ENCODE measurements at regions of chr9 and their contacts with region 1.

Region 1: DNA sequence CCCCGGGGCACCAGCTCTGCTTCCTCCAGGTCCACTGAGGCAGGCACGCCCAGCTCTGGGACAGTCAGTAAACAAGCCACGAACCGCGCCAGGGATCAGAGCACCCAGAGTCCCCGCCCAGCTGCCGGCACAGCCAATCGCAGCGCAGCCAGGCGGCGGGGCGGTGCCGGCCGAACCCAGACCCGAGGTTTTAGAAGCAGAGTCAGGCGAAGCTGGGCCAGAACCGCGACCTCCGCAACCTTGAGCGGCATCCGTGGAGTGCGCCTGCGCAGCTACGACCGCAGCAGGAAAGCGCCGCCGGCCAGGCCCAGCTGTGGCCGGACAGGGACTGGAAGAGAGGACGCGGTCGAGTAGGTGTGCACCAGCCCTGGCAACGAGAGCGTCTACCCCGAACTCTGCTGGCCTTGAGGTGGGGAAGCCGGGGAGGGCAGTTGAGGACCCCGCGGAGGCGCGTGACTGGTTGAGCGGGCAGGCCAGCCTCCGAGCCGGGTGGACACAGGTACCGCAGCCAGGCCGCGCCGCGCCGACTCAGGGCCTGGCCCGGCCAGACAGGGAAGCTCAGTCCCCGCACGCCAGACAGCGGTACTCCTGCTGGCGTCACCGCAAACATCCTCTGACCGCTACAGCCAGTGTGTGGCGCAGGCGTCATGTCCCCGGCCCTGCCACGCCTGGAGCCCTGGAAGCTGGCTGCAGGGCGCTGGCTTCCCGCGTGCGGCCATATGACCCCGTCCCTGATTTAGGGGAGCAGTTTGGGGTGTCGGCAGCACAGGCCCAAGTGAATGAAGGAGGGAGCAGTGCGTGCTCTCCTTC is at the start of gene CTSL:
- DNase-seq: peak; percentile 78
- H3K4me3 Mint-ChIP-seq: peak within 1 kb of the TSS; percentile 98
- H3K27ac Mint-ChIP-seq: peak within 1 kb of the TSS; percentile 99
- H3K4me1 Mint-ChIP-seq: peaks cover 6% of the 10 kb centered on the region
- H3K27me3 Mint-ChIP-seq: no peaks in the 10 kb centered on the region
- CTCF ChIP-seq: peak; percentile 26
- total RNA-seq, gene CTSL: 84.2 and 141 TPM in 2 replicates

Region 2: GRCh38 chr9:87684627-87685219 is 41.4 kb before region 1 on chr9:
- CTCF ChIA-PET with region 1: interaction called, 3 read pairs
- POLR2A ChIA-PET with region 1: interaction called, 3 read pairs
- intact Hi-C with region 1: loop called (anchors 2 kb)
- DNase-seq: peak; percentile 70
- H3K4me3 Mint-ChIP-seq: no peak overlapping the region
- H3K27ac Mint-ChIP-seq: no peak overlapping the region
- H3K4me1 Mint-ChIP-seq: peaks cover 6% of the 10 kb centered on the region
- H3K27me3 Mint-ChIP-seq: no peaks in the 10 kb centered on the region
- CTCF ChIP-seq: peak; percentile 67

Region 3: DNA sequence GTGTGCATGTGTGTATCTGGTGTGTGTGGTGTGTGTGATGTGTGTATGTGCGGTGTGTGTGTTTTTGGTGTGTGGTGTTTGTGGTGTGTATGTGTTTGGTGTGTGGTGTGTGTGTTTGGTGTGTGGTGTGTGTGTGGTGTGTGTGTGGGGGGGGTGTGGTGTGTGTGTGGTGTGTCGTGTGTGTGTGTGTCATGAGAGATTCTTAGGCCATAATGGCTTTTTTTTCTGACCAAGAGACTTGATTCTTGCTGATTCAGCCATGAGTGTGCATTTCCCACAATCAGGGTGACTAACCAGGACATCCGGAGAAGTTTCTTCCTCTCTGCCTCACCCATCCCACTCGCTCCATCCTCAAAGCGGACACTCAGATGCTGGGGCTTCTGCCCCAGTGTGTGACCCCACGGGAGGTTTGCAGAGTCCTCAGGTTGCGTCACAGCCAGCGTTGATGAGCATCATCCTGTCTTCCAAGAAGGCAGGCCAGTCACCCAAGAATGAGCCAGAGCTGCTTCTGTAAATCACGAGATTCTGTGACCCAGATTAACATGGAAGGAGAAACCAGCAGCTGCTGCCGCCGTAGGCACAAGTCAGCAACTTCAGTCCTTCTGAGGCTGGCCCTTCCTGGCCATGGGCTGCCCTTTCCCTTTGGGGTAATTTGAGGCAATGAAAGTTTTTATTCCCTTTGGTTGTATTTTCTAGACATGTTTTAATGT is 12.7 kb before region 1 on chr9:
- CTCF ChIA-PET with region 1: interaction called, 5 read pairs
- POLR2A ChIA-PET with region 1: interaction called, 36 read pairs
- intact Hi-C with region 1: no loop called
- DNase-seq: peak; percentile 94
- H3K4me3 Mint-ChIP-seq: peak overlapping the region; percentile 71
- H3K27ac Mint-ChIP-seq: peak overlapping the region; percentile 85
- H3K4me1 Mint-ChIP-seq: peaks cover 17% of the 10 kb centered on the region
- H3K27me3 Mint-ChIP-seq: no peaks in the 10 kb centered on the region
- CTCF ChIP-seq: no peak

Region 4: DNA sequence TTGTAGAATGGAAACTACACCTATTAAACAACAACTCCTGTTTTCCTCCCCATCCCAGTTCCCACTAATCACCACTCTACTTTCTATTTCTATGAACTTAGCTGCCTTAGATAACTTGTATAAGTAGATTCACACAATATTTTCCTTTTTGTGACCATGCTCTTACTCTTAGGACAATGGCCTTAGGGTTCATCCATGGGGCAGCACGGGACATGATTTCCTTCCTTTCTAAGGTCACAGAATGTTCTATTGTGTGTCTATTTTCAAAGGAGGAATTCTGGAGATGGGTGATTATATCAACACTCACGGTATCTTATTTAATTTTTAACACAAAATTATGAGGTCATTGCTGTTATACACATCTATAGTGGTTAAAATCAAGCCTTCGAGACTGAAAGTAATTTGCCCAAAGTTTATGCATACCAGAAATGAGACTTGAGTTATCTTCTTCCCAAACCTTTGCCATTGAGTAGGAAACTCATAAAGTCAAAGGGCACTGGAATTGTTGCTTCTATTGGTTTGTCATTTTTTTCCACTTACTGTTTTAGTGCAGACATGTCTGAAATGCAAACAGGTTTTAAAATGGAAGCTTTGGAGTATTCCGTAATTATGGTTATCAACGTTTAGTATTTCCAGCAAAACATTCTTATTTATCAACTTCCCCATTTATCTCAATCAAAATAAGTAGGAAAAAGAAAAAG is 23.4 kb after region 1 on chr9:
- CTCF ChIA-PET with region 1: no interaction called
- POLR2A ChIA-PET with region 1: no interaction called
- intact Hi-C with region 1: no loop called
- DNase-seq: no peak
- H3K4me3 Mint-ChIP-seq: no peak overlapping the region
- H3K27ac Mint-ChIP-seq: no peak overlapping the region
- H3K4me1 Mint-ChIP-seq: no peaks in the 10 kb centered on the region
- H3K27me3 Mint-ChIP-seq: no peaks in the 10 kb centered on the region
- CTCF ChIP-seq: no peak

Region 5: DNA sequence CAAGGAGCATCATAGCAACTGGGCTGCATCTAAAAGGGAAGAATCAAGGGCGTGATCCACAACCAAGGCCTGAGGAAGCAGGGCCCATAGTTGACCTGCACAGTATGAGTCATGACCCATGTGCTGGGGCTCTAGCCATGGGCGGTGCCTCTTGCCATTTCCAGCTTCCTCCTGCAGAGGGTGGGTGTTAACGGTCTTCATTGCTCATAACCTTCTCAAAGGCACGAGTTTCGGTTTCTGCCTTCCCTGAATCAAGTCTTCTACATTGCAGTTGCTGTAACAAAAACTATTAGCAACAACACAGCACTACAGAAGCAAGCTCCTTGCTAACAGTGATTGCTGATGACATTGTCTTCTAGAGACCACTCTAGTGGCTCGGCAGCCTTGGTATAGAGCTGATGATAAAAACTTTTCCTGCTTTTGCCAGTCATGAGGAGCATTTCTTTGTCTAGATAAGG is 66.8 kb after region 1 on chr9:
- CTCF ChIA-PET with region 1: interaction called, 3 read pairs
- POLR2A ChIA-PET with region 1: interaction called, 8 read pairs
- intact Hi-C with region 1: loop called (anchors 2 kb)
- DNase-seq: peak; percentile 96
- H3K4me3 Mint-ChIP-seq: peak overlapping the region; percentile 49
- H3K27ac Mint-ChIP-seq: peak overlapping the region; percentile 77
- H3K4me1 Mint-ChIP-seq: peaks cover 22% of the 10 kb centered on the region
- H3K27me3 Mint-ChIP-seq: no peaks in the 10 kb centered on the region
- CTCF ChIP-seq: peak; percentile 20

Measured in MCF 10A (cell line).